A549 (cell line): ENCODE measurements at regions of chr4 and their contacts with region 1.

Region 1: DNA sequence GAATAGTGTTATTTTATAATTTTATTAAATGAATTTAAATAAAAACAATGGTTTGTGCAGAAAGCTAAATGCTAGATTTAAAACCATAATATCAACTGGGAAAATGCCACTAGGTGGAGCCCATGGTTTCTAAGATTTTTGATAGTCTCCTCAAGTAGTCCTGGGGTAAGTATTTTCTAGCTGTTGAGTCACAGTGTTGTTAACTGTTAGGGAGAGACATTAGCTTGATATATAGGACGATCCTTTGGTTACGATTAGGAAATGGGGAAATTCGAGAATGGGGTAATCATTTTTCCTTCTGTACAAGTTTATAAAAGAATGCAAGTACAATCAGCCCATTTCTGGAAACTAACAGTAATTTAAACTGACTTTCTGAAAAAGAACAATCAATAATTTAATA is 378.4 kb downstream of the ANKRD50 start:
- DNase-seq: peak; percentile 10 to 65
- ATAC-seq: peak; percentile 68 to 91; a peak in 5 of 6 replicates
- H3K4me3 ChIP-seq: no peak overlapping the region
- H3K27ac ChIP-seq: 0 out of 6 replicates have a peak overlapping the region, but pooled peaks of 1 of the 2 experiments have one; percentile 15
- H3K4me1 ChIP-seq: no peaks in the 10 kb centered on the region
- CTCF ChIP-seq: peak; percentile 61
- EP300 ChIP-seq: no peak
- POLR2A ChIP-seq: no peak
- RAD21 ChIP-seq: peak; percentile 73 to 86

Region 2: GRCh38 chr4:124202099-124202498 is 132.0 kb before region 1 on chr4:
- CTCF ChIA-PET with region 1: no interaction called
- POLR2A ChIA-PET with region 1: no interaction called
- DNase-seq: no peak
- ATAC-seq: no peak
- H3K4me3 ChIP-seq: no peak overlapping the region
- H3K27ac ChIP-seq: no peak overlapping the region
- H3K4me1 ChIP-seq: no peaks in the 10 kb centered on the region
- CTCF ChIP-seq: no peak
- EP300 ChIP-seq: no peak
- POLR2A ChIP-seq: no peak
- RAD21 ChIP-seq: no peak

Region 3: GRCh38 chr4:124322234-124323065 is 11.7 kb before region 1 on chr4:
- CTCF ChIA-PET with region 1: interaction called, 11 read pairs
- POLR2A ChIA-PET with region 1: no interaction called
- DNase-seq: peak; percentile 3 to 14
- ATAC-seq: no peak
- H3K4me3 ChIP-seq: no peak overlapping the region
- H3K27ac ChIP-seq: no peak overlapping the region
- H3K4me1 ChIP-seq: no peaks in the 10 kb centered on the region
- CTCF ChIP-seq: peak; percentile 56
- EP300 ChIP-seq: no peak
- POLR2A ChIP-seq: no peak
- RAD21 ChIP-seq: peak; percentile 57 to 61

Region 4: GRCh38 chr4:125283707-125284279 is 949.7 kb after region 1 on chr4:
- CTCF ChIA-PET with region 1: interaction called, 34 read pairs
- POLR2A ChIA-PET with region 1: no interaction called
- DNase-seq: peak in 1 of 2 experiments; percentile 36
- ATAC-seq: no peak
- H3K4me3 ChIP-seq: no peak overlapping the region
- H3K27ac ChIP-seq: no peak overlapping the region
- H3K4me1 ChIP-seq: no peaks in the 10 kb centered on the region
- CTCF ChIP-seq: peak; percentile 65
- EP300 ChIP-seq: no peak
- POLR2A ChIP-seq: no peak
- RAD21 ChIP-seq: peak; percentile 59 to 77